CD14-positive monocyte (primary cell): ENCODE measurements at regions of chr7 and their contacts with region 1.

Region 1: GRCh38 chr7:128209229-128210035 is 31.6 kb upstream of the LEP start:
- DNase-seq: peak; percentile 72 to 82 (median 78)
- H3K4me3 ChIP-seq: no peak overlapping the region
- H3K4me3 Mint-ChIP-seq: no peak overlapping the region
- H3K27ac ChIP-seq: no peak overlapping the region
- H3K27ac Mint-ChIP-seq: peak overlapping the region in 1 of 7 donors; percentile 54
- H3K4me1 ChIP-seq: peaks cover 4 to 9% of the 10 kb centered on the region in 2 donors
- H3K4me1 Mint-ChIP-seq: peaks cover 4% of the 10 kb centered on the region
- H3K27me3 ChIP-seq: no peaks in the 10 kb centered on the region
- H3K27me3 Mint-ChIP-seq: peaks cover 4 to 28% (median 17%) of the 10 kb centered on the region in 3 donors
- CTCF ChIP-seq: peak; percentile 92

Region 2: DNA sequence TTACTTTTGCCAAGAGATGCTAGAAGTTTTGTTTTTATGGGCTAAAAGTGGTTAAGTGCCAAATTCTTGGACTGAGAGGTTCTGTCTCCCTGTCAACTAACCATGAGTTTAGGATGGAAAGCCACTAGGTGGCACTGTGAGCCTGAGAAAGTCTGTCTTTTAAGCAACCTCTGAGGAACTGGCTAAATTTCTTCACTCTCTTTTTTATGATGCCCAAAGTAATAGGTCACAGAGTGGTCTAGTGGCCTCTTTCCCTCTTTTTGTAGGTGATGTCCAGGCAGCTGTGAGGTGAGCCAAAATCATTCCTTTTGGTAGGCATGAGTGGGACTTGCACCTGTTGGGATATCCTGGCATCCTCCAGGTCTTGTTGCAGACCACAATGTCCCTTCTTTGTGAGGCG is 500.6 kb before region 1 on chr7:
- intact Hi-C with region 1: loop called (anchors 2 to 5 kb)
- DNase-seq: peak; percentile 66 to 81 (median 70)
- H3K4me3 ChIP-seq: no peak overlapping the region
- H3K4me3 Mint-ChIP-seq: no peak overlapping the region
- H3K27ac ChIP-seq: no peak overlapping the region
- H3K27ac Mint-ChIP-seq: no peak overlapping the region
- H3K4me1 ChIP-seq: no peaks in the 10 kb centered on the region
- H3K4me1 Mint-ChIP-seq: no peaks in the 10 kb centered on the region
- H3K27me3 ChIP-seq: no peaks in the 10 kb centered on the region
- H3K27me3 Mint-ChIP-seq: no peaks in the 10 kb centered on the region
- CTCF ChIP-seq: peak; percentile 84

Region 3: GRCh38 chr7:128031901-128032604 is 177.4 kb before region 1 on chr7:
- intact Hi-C with region 1: loop called in 1 of 2 experiments (anchors 10 kb)
- DNase-seq: peak; percentile 73 to 84 (median 82)
- H3K4me3 ChIP-seq: peak overlapping the region; percentile 3 to 73 (median 48)
- H3K4me3 Mint-ChIP-seq: peak overlapping the region; percentile 87 to 90
- H3K27ac ChIP-seq: no peak overlapping the region
- H3K27ac Mint-ChIP-seq: peak overlapping the region in 3 of 7 donors; percentile 49 to 78 (median 73)
- H3K4me1 ChIP-seq: peaks cover 42 to 45% of the 10 kb centered on the region in 2 donors
- H3K4me1 Mint-ChIP-seq: peaks cover 44% of the 10 kb centered on the region
- H3K27me3 ChIP-seq: peaks cover 5 to 8% of the 10 kb centered on the region in 2 donors
- H3K27me3 Mint-ChIP-seq: peaks cover 9 to 34% (median 21%) of the 10 kb centered on the region in 3 donors
- CTCF ChIP-seq: no peak

Region 4: DNA sequence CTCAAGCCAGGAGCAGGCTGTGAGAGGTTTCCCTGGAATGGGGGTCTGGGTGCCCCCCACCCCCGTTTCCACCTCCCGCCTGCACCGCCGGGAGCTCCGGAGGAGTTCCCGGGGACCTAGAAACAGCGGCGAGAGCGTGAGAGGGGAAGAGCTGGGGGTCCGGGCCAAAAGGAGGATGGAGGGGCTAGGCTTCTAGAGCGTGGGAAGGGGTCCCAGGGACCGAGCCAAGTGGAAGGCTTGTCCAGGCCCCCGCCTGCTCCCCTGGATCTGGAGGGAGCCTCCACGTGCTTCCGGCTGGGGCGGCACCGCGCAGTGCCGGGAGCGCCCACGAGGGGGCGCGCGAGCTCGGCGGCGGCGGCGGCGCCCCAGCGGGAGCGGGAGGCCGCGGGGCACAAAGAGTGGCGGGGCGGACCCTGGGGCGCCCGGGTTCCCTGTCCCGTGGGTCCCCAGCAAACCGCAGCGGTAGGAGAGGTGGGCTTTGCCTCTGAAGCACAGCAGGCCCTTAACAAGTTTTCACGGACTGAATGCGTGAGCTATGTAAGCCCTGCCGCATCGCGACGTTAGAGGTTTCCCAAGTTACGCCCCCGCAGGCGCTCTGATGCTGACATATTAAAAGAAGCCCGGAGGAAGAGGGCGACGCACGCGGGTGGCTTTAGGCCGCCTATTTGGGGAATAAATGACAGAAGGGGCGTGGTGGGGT is 73.8 kb before region 1 on chr7:
- intact Hi-C with region 1: loop called (anchors 1 to 2 kb)
- DNase-seq: peak; percentile 18 to 50 (median 46)
- H3K4me3 ChIP-seq: peak overlapping the region; percentile 36 to 73 (median 48)
- H3K4me3 Mint-ChIP-seq: peak overlapping the region; percentile 76 to 92
- H3K27ac ChIP-seq: no peak overlapping the region
- H3K27ac Mint-ChIP-seq: peak overlapping the region in 4 of 7 donors; percentile 24 to 69 (median 42)
- H3K4me1 ChIP-seq: peaks cover 32 to 35% of the 10 kb centered on the region in 2 donors
- H3K4me1 Mint-ChIP-seq: peaks cover 36% of the 10 kb centered on the region
- H3K27me3 ChIP-seq: peaks cover 33 to 45% of the 10 kb centered on the region in 2 donors
- H3K27me3 Mint-ChIP-seq: peaks cover 56 to 70% (median 61%) of the 10 kb centered on the region in 3 donors
- CTCF ChIP-seq: peak; percentile 99